WTC11 (cell line): ENCODE measurements at regions of chr19 and their contacts with region 1.

Region 1: GRCh38 chr19:58513694-58514563 is 2.1 kb upstream of the SLC27A5 start:
- DNase-seq: peak; percentile 95
- ATAC-seq: peak; percentile 78
- H3K4me3 Mint-ChIP-seq: peak overlapping the region; percentile 75
- H3K27ac Mint-ChIP-seq: peak overlapping the region; percentile 57
- H3K4me1 Mint-ChIP-seq: peaks cover 28% of the 10 kb centered on the region
- H3K27me3 Mint-ChIP-seq: peaks cover 12% of the 10 kb centered on the region
- CTCF ChIP-seq: peak; percentile 89

Region 2: GRCh38 chr19:58380722-58381466 is 133.0 kb before region 1 on chr19 and contains the start of gene ZNF837:
- CTCF ChIA-PET with region 1: no interaction called
- POLR2A ChIA-PET with region 1: no interaction called
- DNase-seq: peak; percentile 99
- ATAC-seq: peak; percentile 90
- H3K4me3 Mint-ChIP-seq: peak within 1 kb of the TSS; percentile 85
- H3K27ac Mint-ChIP-seq: peak within 1 kb of the TSS; percentile 45
- H3K4me1 Mint-ChIP-seq: peaks cover 13% of the 10 kb centered on the region
- H3K27me3 Mint-ChIP-seq: no peaks in the 10 kb centered on the region
- CTCF ChIP-seq: no peak
- total RNA-seq, gene ZNF837: 3.4 to 4.9 TPM (median 4.6 TPM) in 3 replicates

Region 3: DNA sequence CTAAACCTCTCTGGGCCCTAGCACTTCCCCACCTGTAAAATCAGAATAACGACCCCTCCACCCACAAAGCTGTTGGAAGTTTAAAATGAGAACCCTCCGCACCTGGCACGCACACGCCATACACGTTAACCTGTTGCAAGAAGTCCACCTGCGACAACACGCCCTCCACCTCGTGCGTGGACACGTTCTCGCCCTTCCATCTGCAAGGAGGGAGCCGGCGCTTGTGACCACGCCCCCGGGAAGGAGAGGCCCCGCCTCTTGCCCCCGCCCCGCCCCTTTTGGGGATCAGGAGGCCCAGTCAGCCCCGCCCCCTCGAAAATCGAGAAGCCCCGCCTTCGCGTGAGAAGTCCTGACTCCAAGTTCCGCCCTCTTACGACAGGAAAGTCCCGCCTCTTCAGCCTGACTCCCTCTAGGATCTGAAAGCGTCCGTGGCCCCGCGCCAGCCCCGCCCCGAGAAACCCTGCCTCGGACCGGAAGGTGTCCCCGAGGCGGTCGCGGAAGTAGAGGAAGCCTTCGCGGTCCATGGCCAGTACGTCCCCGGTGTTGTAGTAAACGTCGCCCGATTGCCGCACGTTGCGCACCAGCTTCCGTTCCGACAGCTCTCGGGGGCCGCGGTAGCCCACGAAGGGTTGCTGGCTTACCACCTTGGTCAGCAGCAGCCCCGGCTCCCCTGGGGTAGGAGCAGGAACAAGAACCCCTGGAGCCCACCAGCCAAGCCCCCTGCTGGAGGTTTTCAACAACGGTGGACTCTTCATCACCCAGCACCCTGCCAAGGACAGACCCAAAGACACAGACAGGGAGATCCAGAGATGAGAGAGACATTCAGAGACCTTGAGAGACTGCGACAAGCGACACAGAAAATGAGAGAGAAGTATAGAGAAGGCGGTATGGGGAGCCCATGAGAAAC is 14.7 kb before region 1 on chr19:
- CTCF ChIA-PET with region 1: interaction called, 30 read pairs
- POLR2A ChIA-PET with region 1: interaction called, 6 read pairs
- DNase-seq: peak; percentile 100
- ATAC-seq: peak; percentile 98
- H3K4me3 Mint-ChIP-seq: peak overlapping the region; percentile 81
- H3K27ac Mint-ChIP-seq: peak overlapping the region; percentile 98
- H3K4me1 Mint-ChIP-seq: peaks cover 17% of the 10 kb centered on the region
- H3K27me3 Mint-ChIP-seq: peaks cover 11% of the 10 kb centered on the region
- CTCF ChIP-seq: no peak

Region 4: DNA sequence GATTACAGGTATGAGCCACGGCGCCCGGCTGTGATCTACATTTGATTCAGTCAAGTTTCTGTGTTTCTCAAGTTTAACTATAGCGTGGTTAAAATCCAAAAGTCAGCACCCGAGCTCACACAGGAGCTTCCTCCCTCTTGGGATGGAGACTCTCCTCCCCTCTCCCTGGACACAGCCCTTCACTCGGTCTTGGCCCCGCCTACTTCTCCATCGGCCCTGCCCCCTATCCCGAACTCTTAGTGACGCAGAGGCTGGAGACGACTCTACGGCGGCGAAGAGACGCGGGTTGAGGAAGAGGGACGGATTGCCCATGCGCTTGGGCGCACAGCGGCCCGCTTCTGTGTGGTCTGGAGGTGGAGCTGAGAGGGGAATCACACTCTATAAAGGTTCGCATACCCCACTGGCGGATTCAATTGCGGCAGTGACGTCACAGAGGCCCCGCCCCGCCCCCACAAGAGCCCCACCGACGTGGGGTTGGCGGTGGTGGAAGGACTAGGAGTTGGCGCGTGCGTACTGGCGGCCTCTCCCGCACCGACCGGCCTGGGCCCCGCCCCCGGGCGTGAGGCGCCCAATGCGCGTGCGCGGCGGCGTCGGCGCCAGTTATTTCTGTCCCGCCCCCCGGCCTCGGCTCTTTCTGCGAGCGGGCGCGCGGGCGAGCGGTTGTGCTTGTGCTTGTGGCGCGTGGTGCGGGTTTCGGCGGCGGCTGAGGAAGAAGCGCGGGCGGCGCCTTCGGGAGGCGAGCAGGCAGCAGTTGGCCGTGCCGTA is 30.1 kb after region 1 on chr19 and contains the start of gene TRIM28:
- CTCF ChIA-PET with region 1: interaction called, 60 read pairs
- POLR2A ChIA-PET with region 1: interaction called, 25 read pairs
- DNase-seq: peak; percentile 98
- ATAC-seq: peak; percentile 95
- H3K4me3 Mint-ChIP-seq: peak within 1 kb of the TSS; percentile 97
- H3K27ac Mint-ChIP-seq: peak within 1 kb of the TSS; percentile 99
- H3K4me1 Mint-ChIP-seq: peaks cover 17% of the 10 kb centered on the region
- H3K27me3 Mint-ChIP-seq: peaks cover 45% of the 10 kb centered on the region
- CTCF ChIP-seq: no peak
- total RNA-seq, gene TRIM28: 1,095 to 1,221 TPM (median 1,108 TPM) in 3 replicates

Region 5: GRCh38 chr19:58558623-58559274 is 44.8 kb after region 1 on chr19:
- CTCF ChIA-PET with region 1: interaction called, 38 read pairs
- POLR2A ChIA-PET with region 1: interaction called, 34 read pairs
- DNase-seq: peak; percentile 100
- ATAC-seq: peak; percentile 59
- H3K4me3 Mint-ChIP-seq: peak overlapping the region; percentile 97
- H3K27ac Mint-ChIP-seq: peak overlapping the region; percentile 100
- H3K4me1 Mint-ChIP-seq: peaks cover 41% of the 10 kb centered on the region
- H3K27me3 Mint-ChIP-seq: peaks cover 43% of the 10 kb centered on the region
- CTCF ChIP-seq: no peak

Region 6: DNA sequence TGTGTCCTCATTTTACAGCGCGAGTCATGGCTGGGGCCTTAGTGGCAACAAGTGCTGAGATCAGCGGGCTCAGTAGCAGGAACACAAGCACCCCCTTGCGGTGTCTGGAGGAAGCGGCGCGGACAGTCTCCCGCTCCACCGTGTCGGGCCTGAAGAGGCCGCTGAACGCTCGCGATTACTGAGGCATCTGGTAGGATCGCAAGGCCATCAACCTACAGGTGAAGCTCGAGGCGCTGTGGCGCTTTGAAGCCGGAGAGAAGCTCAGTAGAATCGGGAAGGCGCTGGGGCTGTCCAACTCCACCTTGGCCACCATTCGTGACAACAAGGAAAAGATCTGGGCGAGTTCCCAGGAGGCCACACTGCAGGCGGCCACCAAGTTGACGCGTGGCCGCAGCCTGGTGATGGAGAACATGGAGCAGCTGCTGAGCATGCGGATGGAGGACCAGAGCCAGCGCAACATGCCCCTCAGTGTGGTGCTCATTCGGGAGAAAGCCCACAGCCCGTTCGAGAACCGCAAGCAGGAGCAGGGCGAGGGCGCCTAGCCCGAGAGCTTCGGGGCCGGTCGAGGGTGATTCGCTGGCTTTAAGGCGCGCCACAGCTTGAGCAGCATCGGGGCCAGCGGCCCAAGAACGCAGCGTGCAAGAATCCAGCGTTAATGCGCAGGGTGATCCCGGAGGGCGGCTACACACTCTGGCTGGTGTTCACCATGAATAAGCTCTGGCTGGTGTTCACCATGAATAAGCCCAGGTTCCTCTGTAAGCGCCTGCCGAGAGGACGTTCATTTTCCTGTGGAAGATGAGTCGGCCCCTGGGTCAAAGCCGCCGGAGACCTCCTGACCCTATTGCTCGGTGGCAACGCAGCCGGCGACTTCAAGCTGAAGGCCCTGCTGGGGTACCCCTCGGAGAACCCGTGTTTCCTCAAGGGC is 67.6 kb after region 1 on chr19:
- CTCF ChIA-PET with region 1: interaction called, 33 read pairs
- POLR2A ChIA-PET with region 1: no interaction called
- DNase-seq: peak; percentile 97
- ATAC-seq: peak; percentile 97
- H3K4me3 Mint-ChIP-seq: no peak overlapping the region
- H3K27ac Mint-ChIP-seq: peak overlapping the region; percentile 91
- H3K4me1 Mint-ChIP-seq: peaks cover 7% of the 10 kb centered on the region
- H3K27me3 Mint-ChIP-seq: no peaks in the 10 kb centered on the region
- CTCF ChIP-seq: peak; percentile 90